ENCODE measurements at regions of chr19 and their contacts with region 1.

Region 1: GRCh38 chr19:11374433-11375142 is at the start of gene SWSAP1:
- DNase-seq: peak; percentile 87 to 99 (median 99)
- ATAC-seq: peak; percentile 94
- H3K4me3 ChIP-seq: peak within 1 kb of the TSS; percentile 92
- H3K4me3 Mint-ChIP-seq: peak within 1 kb of the TSS in 3 of 10 donors; percentile 31 to 56 (median 45)
- H3K27ac ChIP-seq: peak within 1 kb of the TSS; percentile 92
- H3K27ac Mint-ChIP-seq: peak within 1 kb of the TSS in 1 of 9 donors; percentile 22
- H3K4me1 ChIP-seq: peaks cover 21 to 30% of the 10 kb centered on the region in 2 donors
- H3K4me1 Mint-ChIP-seq: peaks cover 12 to 40% (median 28%) of the 10 kb centered on the region in 7 donors
- H3K27me3 ChIP-seq: no peaks in the 10 kb centered on the region
- H3K27me3 Mint-ChIP-seq: no peaks in the 10 kb centered on the region
- total RNA-seq, gene SWSAP1: 3.4 to 4.2 (median 4.0) TPM

Region 2: GRCh38 chr19:10835754-10836477 is 538.7 kb before region 1 on chr19 and contains the start of gene TMED1:
- CTCF ChIA-PET with region 1: no interaction called
- POLR2A ChIA-PET with region 1: interaction called, 3 read pairs
- intact Hi-C with region 1: loop called in 1 of 2 experiments (anchors 2 kb)
- DNase-seq: peak; percentile 81 to 97 (median 93)
- ATAC-seq: peak; percentile 92
- H3K4me3 ChIP-seq: peak within 1 kb of the TSS; percentile 98
- H3K4me3 Mint-ChIP-seq: peak within 1 kb of the TSS; percentile 82 to 99 (median 96)
- H3K27ac ChIP-seq: peak within 1 kb of the TSS; percentile 93
- H3K27ac Mint-ChIP-seq: peak within 1 kb of the TSS; percentile 98 to 100 (median 99)
- H3K4me1 ChIP-seq: peaks cover 8 to 13% of the 10 kb centered on the region in 2 donors
- H3K4me1 Mint-ChIP-seq: peaks cover 12 to 20% (median 15%) of the 10 kb centered on the region in 7 donors
- H3K27me3 ChIP-seq: no peaks in the 10 kb centered on the region
- H3K27me3 Mint-ChIP-seq: no peaks in the 10 kb centered on the region
- total RNA-seq, gene TMED1: 7.6 to 12.8 (median 9.9) TPM

Region 3: DNA sequence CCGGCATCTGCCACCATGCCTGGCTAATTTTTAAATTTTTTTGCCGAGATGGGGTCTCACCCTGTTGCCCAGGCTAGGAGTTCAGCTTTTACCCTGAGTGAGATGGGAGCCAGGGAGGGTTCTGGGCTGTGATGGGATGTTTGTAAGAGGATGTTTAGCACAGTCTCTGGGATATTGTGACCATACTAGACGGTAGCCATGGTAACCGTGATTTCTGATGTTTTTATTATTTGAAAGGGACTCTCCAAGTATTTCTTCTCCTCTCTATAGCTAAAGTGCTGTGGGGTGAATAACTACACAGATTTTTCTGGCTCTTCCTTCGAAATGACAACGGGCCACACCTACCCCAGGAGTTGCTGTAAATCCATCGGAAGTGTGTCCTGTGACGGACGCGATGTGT is 68.3 kb before region 1 on chr19:
- CTCF ChIA-PET with region 1: no interaction called
- POLR2A ChIA-PET with region 1: no interaction called
- intact Hi-C with region 1: no loop called
- DNase-seq: no peak
- ATAC-seq: no peak
- H3K4me3 ChIP-seq: no peak overlapping the region
- H3K4me3 Mint-ChIP-seq: no peak overlapping the region
- H3K27ac ChIP-seq: no peak overlapping the region
- H3K27ac Mint-ChIP-seq: no peak overlapping the region
- H3K4me1 ChIP-seq: no peaks in the 10 kb centered on the region
- H3K4me1 Mint-ChIP-seq: no peaks in the 10 kb centered on the region
- H3K27me3 ChIP-seq: no peaks in the 10 kb centered on the region
- H3K27me3 Mint-ChIP-seq: peaks cover 0 to 17% (median 7%) of the 10 kb centered on the region in 5 donors

Region 4: DNA sequence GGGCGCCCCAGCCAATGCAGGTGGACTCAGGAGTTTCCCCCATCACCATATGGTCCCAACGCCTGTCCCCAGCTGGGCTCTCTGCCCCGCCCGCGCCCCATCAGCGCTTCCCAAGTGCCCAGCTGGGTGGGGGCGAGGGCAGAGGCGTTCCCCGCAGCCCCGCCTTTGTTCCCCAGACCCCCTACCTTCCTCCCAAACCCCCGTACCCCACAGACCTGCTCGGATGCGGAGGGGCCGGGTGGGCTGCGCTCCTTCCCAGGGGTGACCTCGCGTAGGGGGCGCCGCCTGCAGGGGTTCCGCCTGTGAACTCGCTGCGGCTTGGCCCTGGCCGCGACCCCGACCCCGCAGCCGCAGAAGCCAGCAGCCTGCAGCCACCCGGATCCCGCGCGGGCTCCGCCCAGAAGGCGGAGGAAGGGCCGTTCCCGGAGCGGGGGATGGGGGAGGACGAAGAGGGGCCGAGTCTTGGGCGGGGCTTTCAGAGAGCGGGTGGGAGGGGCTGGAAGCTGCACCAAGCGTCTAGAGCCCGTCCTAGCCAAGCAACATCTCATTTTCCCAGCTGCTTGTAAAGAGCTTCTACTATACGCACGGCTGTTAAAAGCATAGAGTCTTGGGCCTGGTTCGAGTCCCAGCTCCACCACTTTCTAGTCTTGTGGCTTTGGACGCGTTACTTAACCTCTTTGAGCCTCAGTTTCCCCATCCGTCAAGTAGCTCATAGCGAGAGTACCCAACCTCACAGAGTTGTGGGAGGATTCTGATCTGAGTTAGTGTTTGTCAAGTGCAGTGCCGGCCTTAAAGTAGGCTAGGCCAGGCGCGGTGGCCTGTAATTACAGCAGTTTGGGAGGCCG is 35.1 kb before region 1 on chr19 and contains the start of gene RAB3D:
- CTCF ChIA-PET with region 1: interaction called, 3 read pairs
- POLR2A ChIA-PET with region 1: interaction called, 24 read pairs
- intact Hi-C with region 1: no loop called
- DNase-seq: peak; percentile 32 to 85 (median 57)
- ATAC-seq: peak; percentile 93
- H3K4me3 ChIP-seq: peak within 1 kb of the TSS; percentile 75
- H3K4me3 Mint-ChIP-seq: peak within 1 kb of the TSS; percentile 75 to 88 (median 80)
- H3K27ac ChIP-seq: peak within 1 kb of the TSS; percentile 63
- H3K27ac Mint-ChIP-seq: peak within 1 kb of the TSS in 6 of 9 donors; percentile 46 to 86 (median 64)
- H3K4me1 ChIP-seq: peaks cover 5 to 28% of the 10 kb centered on the region in 2 donors
- H3K4me1 Mint-ChIP-seq: peaks cover 0 to 35% (median 28%) of the 10 kb centered on the region in 7 donors
- H3K27me3 ChIP-seq: no peaks in the 10 kb centered on the region
- H3K27me3 Mint-ChIP-seq: no peaks in the 10 kb centered on the region
- total RNA-seq, gene RAB3D: 7.4 to 38.2 (median 8.8) TPM

Region 5: GRCh38 chr19:11355160-11356073 is 19.2 kb before region 1 on chr19 and contains the start of gene PLPPR2:
- CTCF ChIA-PET with region 1: no interaction called
- POLR2A ChIA-PET with region 1: interaction called, 6 read pairs
- intact Hi-C with region 1: loop called (anchors 1 kb)
- DNase-seq: peak; percentile 73 to 87 (median 80)
- ATAC-seq: peak; percentile 98
- H3K4me3 ChIP-seq: peak within 1 kb of the TSS; percentile 41
- H3K4me3 Mint-ChIP-seq: peak within 1 kb of the TSS; percentile 63 to 90 (median 80)
- H3K27ac ChIP-seq: peak within 1 kb of the TSS; percentile 23
- H3K27ac Mint-ChIP-seq: peak within 1 kb of the TSS in 5 of 9 donors; percentile 38 to 90 (median 77)
- H3K4me1 ChIP-seq: peaks cover 3 to 4% of the 10 kb centered on the region in 2 donors
- H3K4me1 Mint-ChIP-seq: peaks cover 9 to 19% (median 13%) of the 10 kb centered on the region in 7 donors
- H3K27me3 ChIP-seq: peaks cover 0 to 6% of the 10 kb centered on the region in 2 donors
- H3K27me3 Mint-ChIP-seq: peaks cover 0 to 17% (median 7%) of the 10 kb centered on the region in 5 donors
- total RNA-seq, gene PLPPR2: 2.6 to 31.0 (median 13.7) TPM

Region 6: DNA sequence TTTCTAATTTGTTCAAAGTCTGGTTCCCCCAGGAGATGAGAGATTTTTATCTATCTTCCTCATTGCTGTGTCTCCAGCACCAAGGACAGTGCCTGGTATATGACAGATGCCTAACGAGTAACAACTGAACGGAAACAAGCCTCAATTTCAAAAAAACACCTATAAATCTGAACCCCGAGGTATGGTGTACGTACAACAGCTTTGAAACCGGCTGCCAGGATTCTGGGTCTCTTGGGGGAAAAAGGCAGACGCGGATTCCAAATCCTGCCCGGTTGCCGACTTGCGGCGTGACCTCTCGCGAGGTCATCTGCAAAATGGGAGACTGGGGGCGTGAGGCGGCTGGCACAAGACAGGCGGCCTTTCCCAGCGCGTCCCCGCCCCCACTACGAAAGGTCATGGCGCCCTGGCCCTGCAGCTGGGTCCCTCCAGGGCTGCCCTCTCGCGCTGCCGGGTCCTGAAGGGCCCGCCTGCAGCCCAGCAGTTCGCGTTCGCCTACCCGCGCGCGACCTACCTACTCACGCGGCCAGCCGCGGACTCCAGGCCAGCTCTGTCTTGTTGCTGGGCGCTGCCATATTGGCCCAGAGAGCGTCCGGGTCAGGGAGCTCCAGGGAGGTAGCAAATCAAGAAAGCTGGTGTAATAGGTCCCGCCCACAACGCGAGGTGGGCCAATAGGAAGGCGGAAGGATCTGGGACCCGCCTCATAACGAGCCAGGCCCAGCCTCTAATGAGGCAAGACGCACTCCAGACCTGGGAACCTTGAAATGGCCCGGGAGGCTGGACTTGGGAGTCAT is 154.2 kb after region 1 on chr19 and contains the start of gene ECSIT:
- CTCF ChIA-PET with region 1: no interaction called
- POLR2A ChIA-PET with region 1: interaction called, 11 read pairs
- intact Hi-C with region 1: no loop called
- DNase-seq: peak; percentile 78 to 93 (median 89)
- ATAC-seq: peak; percentile 99
- H3K4me3 ChIP-seq: peak within 1 kb of the TSS; percentile 90
- H3K4me3 Mint-ChIP-seq: peak within 1 kb of the TSS; percentile 89 to 99 (median 96)
- H3K27ac ChIP-seq: peak within 1 kb of the TSS; percentile 77
- H3K27ac Mint-ChIP-seq: peak within 1 kb of the TSS; percentile 85 to 96 (median 94)
- H3K4me1 ChIP-seq: peaks cover 8 to 10% of the 10 kb centered on the region in 2 donors
- H3K4me1 Mint-ChIP-seq: peaks cover 12 to 27% (median 21%) of the 10 kb centered on the region in 7 donors
- H3K27me3 ChIP-seq: no peaks in the 10 kb centered on the region
- H3K27me3 Mint-ChIP-seq: no peaks in the 10 kb centered on the region
- total RNA-seq, gene ECSIT: 25.8 to 50.3 (median 32.5) TPM